ENCODE measurements at regions of chr1 and their contacts with region 1.

Region 1: DNA sequence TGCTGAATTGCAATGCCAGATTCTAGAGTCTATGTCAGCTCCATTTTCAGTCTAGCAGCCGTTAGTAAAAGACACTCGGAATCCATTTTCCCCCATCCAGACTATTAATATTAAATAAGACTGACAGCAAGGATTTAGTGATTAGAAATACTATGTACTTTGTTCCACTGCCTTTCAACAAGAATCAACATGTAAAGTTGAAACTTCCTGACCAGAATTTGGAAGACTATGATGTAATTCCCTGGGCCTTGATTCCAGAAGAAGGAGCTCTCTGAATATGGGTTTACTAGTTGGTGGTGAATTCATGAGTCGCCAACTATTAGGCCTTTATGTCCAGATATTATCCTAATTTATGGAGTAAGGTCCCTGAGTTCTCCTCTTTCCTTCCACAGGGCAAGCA is 24.8 kb downstream of the KDM1A start:
- DNase-seq: no peak
- ATAC-seq: no peak
- H3K4me3 Mint-ChIP-seq: no peak overlapping the region
- H3K27ac Mint-ChIP-seq: no peak overlapping the region
- H3K4me1 Mint-ChIP-seq: peaks cover 33% of the 10 kb centered on the region
- H3K27me3 Mint-ChIP-seq: no peaks in the 10 kb centered on the region

Region 2: GRCh38 chr1:21696931-21697330 is 1347.1 kb before region 1 on chr1:
- CTCF ChIA-PET with region 1: no interaction called
- POLR2A ChIA-PET with region 1: interaction called, 10 read pairs
- intact Hi-C with region 1: no loop called
- DNase-seq: no peak
- ATAC-seq: no peak
- H3K4me3 Mint-ChIP-seq: no peak overlapping the region
- H3K27ac Mint-ChIP-seq: no peak overlapping the region
- H3K4me1 Mint-ChIP-seq: peaks cover 2% of the 10 kb centered on the region
- H3K27me3 Mint-ChIP-seq: no peaks in the 10 kb centered on the region